ENCODE measurements at regions of chr9 and their contacts with region 1.

Region 1: GRCh38 chr9:133792721-133793470 is 54.7 kb upstream of the SARDH start:
- DNase-seq: peak; percentile 77 to 82
- ATAC-seq: peak; percentile 76 to 87 (median 85)
- H3K4me3 ChIP-seq: peak overlapping the region in 1 of 10 donors; percentile 31
- H3K27ac ChIP-seq: no peak overlapping the region
- H3K4me1 ChIP-seq: peaks cover 4 to 34% (median 30%) of the 10 kb centered on the region in 9 donors
- H3K27me3 ChIP-seq: no peaks in the 10 kb centered on the region
- CTCF ChIP-seq: peak; percentile 87 to 99 (median 96)

Region 2: GRCh38 chr9:133726401-133727276 is 66.3 kb before region 1 on chr9:
- intact Hi-C with region 1: no loop called
- DNase-seq: peak; percentile 62 to 65
- ATAC-seq: peak; percentile 60 to 90 (median 79)
- H3K4me3 ChIP-seq: no peak overlapping the region
- H3K27ac ChIP-seq: no peak overlapping the region
- H3K4me1 ChIP-seq: no peaks in the 10 kb centered on the region
- H3K27me3 ChIP-seq: peaks cover 0 to 47% (median 27%) of the 10 kb centered on the region in 7 donors
- CTCF ChIP-seq: peak; percentile 39 to 78 (median 65)

Region 3: GRCh38 chr9:133992780-133993634 is 200.1 kb after region 1 on chr9:
- intact Hi-C with region 1: loop called (anchors 1 to 2 kb)
- DNase-seq: peak; percentile 84 to 86
- ATAC-seq: peak; percentile 77 to 92 (median 86)
- H3K4me3 ChIP-seq: peak overlapping the region; percentile 60 to 82 (median 76)
- H3K27ac ChIP-seq: peak overlapping the region; percentile 74 to 97 (median 95)
- H3K4me1 ChIP-seq: peaks cover 8 to 34% (median 23%) of the 10 kb centered on the region in 9 donors
- H3K27me3 ChIP-seq: peaks cover 0 to 17% (median 3%) of the 10 kb centered on the region in 7 donors
- CTCF ChIP-seq: peak in 8 of 9 donors; percentile 21 to 73 (median 48)

Region 4: DNA sequence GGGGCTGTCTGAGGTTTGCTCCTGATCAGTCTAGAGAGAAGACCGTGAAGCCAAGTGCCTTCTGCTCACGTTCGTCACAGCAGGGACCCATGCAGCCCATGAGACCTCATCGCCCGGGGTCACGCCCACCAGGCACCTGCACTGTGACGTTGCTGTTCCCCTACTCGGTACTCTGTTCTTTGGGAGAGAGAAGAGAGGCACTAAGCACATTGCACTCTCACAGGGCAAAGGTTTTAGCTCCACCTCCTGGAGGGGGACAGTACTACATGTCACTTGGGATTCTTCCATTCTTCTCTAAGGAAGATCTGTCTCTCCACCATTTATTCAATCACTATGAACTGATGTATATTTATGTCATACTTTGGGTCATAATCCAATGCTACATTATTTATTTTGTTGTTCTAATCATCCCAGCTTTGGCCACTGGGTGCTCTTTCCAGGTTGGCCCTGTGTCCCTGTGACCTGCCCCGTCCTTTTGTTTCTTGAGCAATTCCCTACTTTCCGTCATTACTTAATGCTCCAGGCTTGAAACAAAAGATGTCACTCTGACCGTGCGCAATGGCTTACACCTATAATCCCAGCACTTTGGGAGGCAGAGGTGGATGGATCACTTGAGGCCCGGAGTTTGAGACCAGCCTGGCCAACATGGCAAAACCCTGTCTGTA is 306.4 kb after region 1 on chr9:
- intact Hi-C with region 1: loop called in 5 of 10 experiments (anchors 1 to 10 kb)
- DNase-seq: no peak
- ATAC-seq: peak in 3 of 8 donors; percentile 24 to 57 (median 49)
- H3K4me3 ChIP-seq: no peak overlapping the region
- H3K27ac ChIP-seq: no peak overlapping the region
- H3K4me1 ChIP-seq: no peaks in the 10 kb centered on the region
- H3K27me3 ChIP-seq: peaks cover 0 to 18% (median 3%) of the 10 kb centered on the region in 7 donors
- CTCF ChIP-seq: peak; percentile 18 to 75 (median 61)

Measured in heart right ventricle (tissue), 16 donors.